Endothelial cell of umbilical vein (primary cell): ENCODE measurements at regions of chr12 and their contacts with region 1.

Region 1: DNA sequence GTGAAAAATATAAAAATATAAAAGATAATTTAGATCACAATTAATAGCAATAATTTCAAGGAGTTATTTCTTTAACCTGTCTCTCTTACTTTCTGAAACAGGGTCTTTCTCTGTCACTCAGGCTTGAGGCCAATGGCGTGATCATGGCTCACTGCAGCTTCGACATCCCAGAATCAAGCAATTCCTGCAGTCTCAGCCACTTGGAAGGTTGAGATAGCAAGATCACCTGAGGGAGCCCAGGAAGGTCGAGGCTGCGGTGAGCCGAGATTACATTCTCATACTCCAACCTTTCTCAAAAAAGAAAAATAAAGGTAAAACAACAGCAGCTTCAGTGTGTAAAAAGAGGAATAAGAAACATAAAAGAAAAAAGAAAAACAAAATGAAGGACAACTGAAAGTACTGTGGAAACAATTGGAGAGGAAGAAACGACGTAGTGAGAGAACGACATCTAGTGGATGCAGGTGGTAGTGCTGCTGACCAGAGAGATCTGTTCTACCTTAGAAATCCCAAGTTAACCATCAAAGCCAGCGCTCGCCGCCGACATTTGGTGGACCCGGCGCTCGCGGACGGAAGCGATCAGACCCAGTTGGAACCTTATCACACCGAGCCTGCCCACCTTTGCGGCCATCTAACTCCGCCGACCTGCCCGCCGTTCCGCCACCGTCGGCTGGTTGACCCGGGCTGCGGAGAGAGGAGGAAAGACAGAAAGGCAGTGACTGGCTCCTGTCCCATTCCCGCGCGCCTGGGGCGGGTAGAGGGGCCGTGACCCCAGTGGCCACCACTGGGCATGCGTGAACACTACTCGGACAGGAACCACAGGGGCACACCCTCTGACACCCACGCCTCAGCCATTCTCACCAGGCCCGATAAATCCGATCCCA is 196.1 kb downstream of the ALG10 start:
- DNase-seq: peak; percentile 55
- H3K4me3 ChIP-seq: peak overlapping the region in 1 of 3 experiments; percentile 2
- H3K27ac ChIP-seq: no peak overlapping the region
- H3K4me1 ChIP-seq: no peaks in the 10 kb centered on the region
- H3K27me3 ChIP-seq: no peaks in the 10 kb centered on the region
- CTCF ChIP-seq: peak; percentile 71 to 81
- POLR2A ChIP-seq: no peak

Region 2: GRCh38 chr12:34126239-34126641 is 92.2 kb before region 1 on chr12:
- CTCF ChIA-PET with region 1: no interaction called
- POLR2A ChIA-PET with region 1: no interaction called
- dilution Hi-C with region 1: no loop called
- intact Hi-C with region 1: loop called (anchors 1 kb)
- DNase-seq: no peak
- H3K4me3 ChIP-seq: no peak overlapping the region
- H3K27ac ChIP-seq: no peak overlapping the region
- H3K4me1 ChIP-seq: no peaks in the 10 kb centered on the region
- H3K27me3 ChIP-seq: no peaks in the 10 kb centered on the region
- CTCF ChIP-seq: no peak
- POLR2A ChIP-seq: no peak

Region 3: GRCh38 chr12:34233618-34234017 is 15.2 kb after region 1 on chr12:
- CTCF ChIA-PET with region 1: no interaction called
- POLR2A ChIA-PET with region 1: no interaction called
- dilution Hi-C with region 1: no loop called
- intact Hi-C with region 1: loop called (anchors 1 kb)
- DNase-seq: no peak
- H3K4me3 ChIP-seq: no peak overlapping the region
- H3K27ac ChIP-seq: no peak overlapping the region
- H3K4me1 ChIP-seq: no peaks in the 10 kb centered on the region
- H3K27me3 ChIP-seq: no peaks in the 10 kb centered on the region
- CTCF ChIP-seq: no peak
- POLR2A ChIP-seq: no peak

Region 4: GRCh38 chr12:34244608-34245007 is 26.2 kb after region 1 on chr12:
- CTCF ChIA-PET with region 1: no interaction called
- POLR2A ChIA-PET with region 1: no interaction called
- dilution Hi-C with region 1: no loop called
- intact Hi-C with region 1: no loop called
- DNase-seq: no peak
- H3K4me3 ChIP-seq: no peak overlapping the region
- H3K27ac ChIP-seq: no peak overlapping the region
- H3K4me1 ChIP-seq: no peaks in the 10 kb centered on the region
- H3K27me3 ChIP-seq: no peaks in the 10 kb centered on the region
- CTCF ChIP-seq: no peak
- POLR2A ChIP-seq: no peak

Region 5: DNA sequence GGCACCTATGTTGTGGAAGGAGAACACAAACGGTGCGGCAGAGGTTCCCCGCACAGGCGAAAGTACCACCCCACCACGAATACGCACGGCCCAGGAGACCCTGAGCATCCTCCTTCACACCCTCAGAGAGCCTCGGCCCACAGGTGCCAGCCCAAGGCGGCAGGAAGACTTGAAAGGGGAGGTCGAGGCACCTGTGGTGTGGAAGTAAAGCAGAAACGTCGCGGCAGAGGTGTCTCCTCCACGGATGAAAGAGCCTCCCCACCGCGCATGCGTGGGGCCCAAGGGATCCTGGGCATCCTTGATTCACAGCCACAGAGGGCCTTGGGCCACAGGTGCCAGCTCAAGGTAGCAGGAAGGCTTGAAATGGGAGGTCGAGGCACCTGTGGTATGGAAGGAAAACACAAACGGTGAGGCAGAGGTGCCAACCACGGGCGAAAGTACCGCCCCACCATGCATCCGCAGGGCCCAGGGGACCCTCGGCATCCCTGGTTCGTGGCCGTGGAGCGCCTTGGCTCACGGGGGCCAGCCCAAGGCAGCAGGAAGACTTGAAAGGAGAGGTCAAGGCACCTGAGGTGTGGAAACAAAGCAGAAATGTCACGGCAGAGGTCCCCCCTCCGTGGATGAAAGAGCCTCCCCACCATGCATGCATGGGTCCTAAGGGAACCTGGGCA is 184.0 kb after region 1 on chr12:
- CTCF ChIA-PET with region 1: no interaction called
- POLR2A ChIA-PET with region 1: no interaction called
- dilution Hi-C with region 1: no loop called
- intact Hi-C with region 1: no loop called
- DNase-seq: no peak
- H3K4me3 ChIP-seq: no peak overlapping the region
- H3K27ac ChIP-seq: no peak overlapping the region
- H3K4me1 ChIP-seq: no peaks in the 10 kb centered on the region
- H3K27me3 ChIP-seq: no peaks in the 10 kb centered on the region
- CTCF ChIP-seq: no peak
- POLR2A ChIP-seq: no peak